Endothelial cell of umbilical vein (primary cell): ENCODE measurements at regions of chr20 and their contacts with region 1.

Region 1: DNA sequence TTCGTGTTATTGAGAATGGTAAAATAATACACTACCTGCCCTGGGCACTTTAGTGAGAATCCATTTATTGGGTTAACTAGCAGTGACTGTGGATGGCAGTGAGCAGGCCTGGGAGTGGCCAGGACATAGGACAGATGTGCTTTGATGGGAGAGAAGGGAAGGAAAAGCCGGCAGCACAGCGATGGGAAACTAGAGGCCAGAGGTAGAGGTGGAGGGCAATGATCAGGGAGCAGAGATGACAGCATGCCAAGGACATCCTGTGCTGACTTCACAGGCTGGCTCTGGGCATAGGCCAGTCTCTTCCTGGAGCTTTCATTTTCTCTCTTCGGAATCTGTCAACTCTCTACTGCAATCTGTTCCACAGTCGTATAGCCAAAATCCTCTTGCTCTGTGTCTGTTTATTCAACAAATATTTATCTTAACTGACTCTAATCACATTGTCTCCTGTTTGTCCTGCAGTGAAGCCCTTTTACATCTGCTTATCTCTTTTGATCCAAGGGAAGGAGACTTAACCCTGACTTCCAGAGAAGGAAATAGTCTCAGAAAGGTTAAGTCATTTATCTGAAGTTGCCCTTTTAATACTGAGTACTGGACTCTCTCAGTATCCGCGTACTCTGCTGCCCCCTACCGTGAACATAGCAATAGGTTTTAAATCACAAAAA is 18.4 kb upstream of the MMP24 start:
- DNase-seq: peak; percentile 92
- H3K4me3 ChIP-seq: peak overlapping the region in 1 of 3 experiments; percentile 42
- H3K27ac ChIP-seq: peak overlapping the region; percentile 53
- H3K4me1 ChIP-seq: peaks cover 6% of the 10 kb centered on the region
- H3K27me3 ChIP-seq: no peaks in the 10 kb centered on the region
- CTCF ChIP-seq: peak; percentile 62 to 66
- POLR2A ChIP-seq: peak; percentile 16

Region 2: DNA sequence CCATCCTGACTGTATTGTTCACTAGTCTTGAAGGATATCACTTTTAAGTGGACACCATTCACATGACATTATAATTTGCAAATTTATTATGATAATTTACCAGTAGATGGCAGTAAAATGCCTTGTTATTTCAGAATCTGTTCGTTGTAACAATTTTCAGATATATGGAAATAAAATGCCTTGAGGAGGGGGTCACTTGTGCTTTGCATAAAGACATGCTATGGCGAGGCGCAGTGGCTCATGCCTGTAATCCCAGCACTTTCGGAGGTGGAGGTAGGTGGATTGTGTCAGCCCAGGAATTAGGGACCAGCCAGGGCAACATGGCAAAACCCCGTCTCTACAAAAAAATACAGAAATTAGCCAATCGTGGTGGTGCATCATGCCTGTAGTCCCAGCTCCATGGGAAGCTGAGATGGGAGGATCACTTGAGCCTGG is 373.6 kb before region 1 on chr20:
- CTCF ChIA-PET with region 1: interaction called, 5 read pairs
- POLR2A ChIA-PET with region 1: no interaction called
- dilution Hi-C with region 1: no loop called
- intact Hi-C with region 1: loop called (anchors 1 kb)
- DNase-seq: peak; percentile 50
- H3K4me3 ChIP-seq: no peak overlapping the region
- H3K27ac ChIP-seq: no peak overlapping the region
- H3K4me1 ChIP-seq: peaks cover 2% of the 10 kb centered on the region
- H3K27me3 ChIP-seq: peaks cover 16 to 25% of the 10 kb centered on the region in 2 experiments
- CTCF ChIP-seq: peak in 1 of 2 donors; percentile 18
- POLR2A ChIP-seq: no peak

Region 3: GRCh38 chr20:35104685-35105295 is 103.3 kb before region 1 on chr20:
- CTCF ChIA-PET with region 1: interaction called, 12 read pairs
- POLR2A ChIA-PET with region 1: no interaction called
- dilution Hi-C with region 1: no loop called
- intact Hi-C with region 1: no loop called
- DNase-seq: no peak
- H3K4me3 ChIP-seq: no peak overlapping the region
- H3K27ac ChIP-seq: no peak overlapping the region
- H3K4me1 ChIP-seq: no peaks in the 10 kb centered on the region
- H3K27me3 ChIP-seq: no peaks in the 10 kb centered on the region
- CTCF ChIP-seq: no peak
- POLR2A ChIP-seq: no peak

Region 4: GRCh38 chr20:35171753-35172433 is 36.2 kb before region 1 on chr20 and contains the start of gene PROCR:
- CTCF ChIA-PET with region 1: interaction called, 7 read pairs
- POLR2A ChIA-PET with region 1: interaction called, 7 read pairs
- dilution Hi-C with region 1: no loop called
- intact Hi-C with region 1: loop called (anchors 1 kb)
- DNase-seq: peak; percentile 98
- H3K4me3 ChIP-seq: peak within 1 kb of the TSS; percentile 70 to 93 (median 80)
- H3K27ac ChIP-seq: peak within 1 kb of the TSS; percentile 79
- H3K4me1 ChIP-seq: peaks cover 37% of the 10 kb centered on the region
- H3K27me3 ChIP-seq: no peaks in the 10 kb centered on the region
- CTCF ChIP-seq: no peak
- POLR2A ChIP-seq: peak; percentile 98
- total RNA-seq, gene PROCR: 228 and 251 TPM in 2 replicates

Region 5: DNA sequence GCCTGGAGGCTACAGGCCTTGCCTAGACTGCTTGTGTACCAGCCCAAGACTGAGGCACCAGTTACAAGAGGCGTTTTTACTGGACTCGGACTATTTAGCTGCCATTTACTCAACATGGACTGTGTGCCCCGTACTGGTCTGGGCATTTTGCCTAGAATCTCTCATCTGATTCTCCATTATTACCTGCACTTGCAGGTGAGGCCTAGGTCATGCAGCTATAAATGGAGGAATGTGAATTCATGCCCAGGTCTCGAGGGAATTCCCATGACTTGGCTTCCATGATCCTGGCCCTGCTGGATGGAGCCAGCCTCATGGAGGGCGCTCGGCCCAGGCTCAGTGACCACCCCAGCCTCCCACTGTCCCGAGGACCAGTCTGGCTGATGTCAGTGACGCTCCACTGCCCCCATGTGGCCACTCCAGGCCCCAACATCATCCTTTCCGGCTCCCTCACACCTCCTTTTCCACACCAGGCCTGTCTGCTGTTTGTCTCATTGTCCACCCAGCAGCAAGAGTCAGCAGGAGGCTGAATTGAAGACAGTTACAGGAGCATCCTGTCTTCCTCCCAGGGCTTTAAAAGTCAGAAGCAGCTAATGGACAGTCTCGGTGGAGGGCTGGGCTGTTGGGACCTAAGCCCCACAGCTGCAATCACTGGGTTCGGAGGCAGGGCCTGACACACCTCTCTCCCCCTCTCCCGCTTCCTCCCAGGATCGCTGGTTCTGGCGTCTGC is 61.1 kb after region 1 on chr20:
- CTCF ChIA-PET with region 1: interaction called, 6 read pairs
- POLR2A ChIA-PET with region 1: no interaction called
- dilution Hi-C with region 1: no loop called
- intact Hi-C with region 1: loop called (anchors 1 kb)
- DNase-seq: peak; percentile 66
- H3K4me3 ChIP-seq: no peak overlapping the region
- H3K27ac ChIP-seq: no peak overlapping the region
- H3K4me1 ChIP-seq: no peaks in the 10 kb centered on the region
- H3K27me3 ChIP-seq: no peaks in the 10 kb centered on the region
- CTCF ChIP-seq: peak; percentile 87 to 95
- POLR2A ChIP-seq: no peak